ENCODE measurements at regions of chr6 and their contacts with region 1.

Region 1: DNA sequence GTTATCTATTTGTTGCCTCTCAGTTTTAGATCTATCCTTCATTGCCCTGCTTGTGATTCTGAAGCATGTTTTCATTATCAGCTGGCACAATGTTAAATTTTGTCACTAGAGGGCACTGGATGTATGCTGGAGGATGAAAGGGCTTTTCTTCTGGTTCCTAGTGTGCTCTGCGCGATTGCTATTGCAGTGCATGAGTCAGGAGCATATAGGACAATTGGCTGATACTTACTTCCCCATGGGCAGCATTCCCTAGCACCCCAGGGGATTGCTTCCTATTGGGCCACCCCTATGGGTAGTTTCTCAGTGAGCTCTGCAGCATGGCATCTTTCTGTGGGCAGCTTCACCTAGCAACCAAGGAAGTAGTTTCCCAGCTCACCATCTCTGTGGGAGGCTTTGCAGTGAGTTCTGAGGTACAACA is 280.3 kb upstream of the SYNCRIP start:
- DNase-seq: no peak
- ATAC-seq: peak; percentile 57
- H3K4me3 ChIP-seq: no peak overlapping the region
- H3K27ac ChIP-seq: no peak overlapping the region
- H3K4me1 ChIP-seq: no peaks in the 10 kb centered on the region
- H3K27me3 ChIP-seq: no peaks in the 10 kb centered on the region

Region 2: DNA sequence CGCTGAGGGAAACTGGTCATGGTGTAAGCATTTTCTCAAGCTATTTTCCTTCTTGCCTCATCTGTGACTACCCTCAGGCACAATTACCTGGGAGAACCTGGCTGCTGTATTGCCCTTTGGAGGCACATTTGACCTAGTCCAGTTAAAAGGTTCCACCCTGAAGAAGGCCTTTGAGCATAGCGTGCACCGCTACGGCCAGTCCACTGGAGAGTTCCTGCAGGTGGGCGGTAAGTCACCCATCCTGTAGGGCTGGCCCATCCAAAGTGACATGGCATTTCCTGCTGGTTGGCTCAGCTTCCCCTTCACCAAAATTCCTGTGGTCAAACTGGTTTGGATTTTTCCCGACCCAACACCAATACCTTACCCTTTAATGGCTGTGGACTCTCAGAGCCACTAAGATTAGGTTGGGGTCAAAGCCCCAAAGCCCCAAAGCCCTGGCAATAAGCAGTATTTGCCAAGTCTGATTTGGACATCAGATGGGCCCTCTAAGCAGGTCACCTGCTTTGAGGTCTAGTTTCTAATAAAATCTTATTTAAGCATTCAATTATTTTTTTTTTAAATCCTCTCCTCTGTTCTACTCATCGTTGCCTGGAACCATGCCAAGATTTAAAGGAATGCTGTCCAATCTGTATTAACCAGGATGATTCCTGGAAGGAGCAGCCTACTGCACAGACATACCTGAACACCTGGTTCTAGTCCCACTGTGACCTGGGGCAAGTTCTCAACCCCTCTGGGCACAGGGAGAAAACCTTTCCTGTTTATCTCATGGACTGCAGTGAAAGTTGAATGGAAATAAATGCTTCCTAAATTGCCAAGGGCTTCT is 432.4 kb before region 1 on chr6:
- intact Hi-C with region 1: no loop called
- DNase-seq: no peak
- ATAC-seq: no peak
- H3K4me3 ChIP-seq: no peak overlapping the region
- H3K27ac ChIP-seq: no peak overlapping the region
- H3K4me1 ChIP-seq: no peaks in the 10 kb centered on the region
- H3K27me3 ChIP-seq: no peaks in the 10 kb centered on the region

Region 3: DNA sequence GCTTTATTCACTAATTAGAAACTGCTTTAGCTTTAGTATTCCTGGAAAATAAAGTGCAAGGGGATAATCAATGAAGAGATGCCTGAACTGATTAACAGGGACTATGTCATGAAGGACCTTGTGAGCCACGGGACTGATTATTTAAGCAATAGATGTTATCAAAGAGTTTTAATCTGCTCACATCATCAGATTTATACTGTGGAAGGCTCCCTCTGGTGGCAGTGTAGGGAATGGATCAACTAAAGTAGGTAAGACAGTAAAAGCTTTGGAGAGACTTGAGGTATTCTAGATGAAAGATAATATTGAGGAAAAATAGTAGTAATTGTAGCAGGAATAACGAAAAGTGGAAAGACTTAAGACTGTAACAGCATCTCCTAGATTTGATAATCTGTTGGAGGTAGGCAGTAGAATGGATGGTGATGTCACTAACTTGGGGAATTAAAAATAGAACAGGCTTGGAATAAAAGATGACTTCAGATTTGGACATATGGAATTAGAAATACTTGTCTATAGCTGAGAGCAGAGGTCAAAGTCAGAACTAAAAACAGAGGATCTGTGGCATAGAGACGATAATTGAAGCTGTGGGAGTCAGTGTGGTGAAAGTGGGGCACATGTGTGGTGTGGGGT is 934.0 kb after region 1 on chr6:
- intact Hi-C with region 1: loop called (anchors 5 to 10 kb)
- DNase-seq: no peak
- ATAC-seq: no peak
- H3K4me3 ChIP-seq: no peak overlapping the region
- H3K27ac ChIP-seq: no peak overlapping the region
- H3K4me1 ChIP-seq: no peaks in the 10 kb centered on the region
- H3K27me3 ChIP-seq: no peaks in the 10 kb centered on the region

Region 4: GRCh38 chr6:86937219-86938079 is 1014.4 kb after region 1 on chr6 and contains the start of gene HTR1E:
- intact Hi-C with region 1: loop called in 1 of 2 experiments (anchors 10 kb)
- DNase-seq: peak in 1 of 2 donors; percentile 69
- ATAC-seq: peak; percentile 36
- H3K4me3 ChIP-seq: no peak within 1 kb of the TSS
- H3K27ac ChIP-seq: no peak within 1 kb of the TSS
- H3K4me1 ChIP-seq: no peaks in the 10 kb centered on the region
- H3K27me3 ChIP-seq: peaks cover 0 to 1% of the 10 kb centered on the region in 2 donors
- total RNA-seq, gene HTR1E: not detected

Measured in aorta (tissue), 5 donors.